Aorta (tissue), 5 donors: ENCODE measurements at regions of chr12 and their contacts with region 1.

Region 1: DNA sequence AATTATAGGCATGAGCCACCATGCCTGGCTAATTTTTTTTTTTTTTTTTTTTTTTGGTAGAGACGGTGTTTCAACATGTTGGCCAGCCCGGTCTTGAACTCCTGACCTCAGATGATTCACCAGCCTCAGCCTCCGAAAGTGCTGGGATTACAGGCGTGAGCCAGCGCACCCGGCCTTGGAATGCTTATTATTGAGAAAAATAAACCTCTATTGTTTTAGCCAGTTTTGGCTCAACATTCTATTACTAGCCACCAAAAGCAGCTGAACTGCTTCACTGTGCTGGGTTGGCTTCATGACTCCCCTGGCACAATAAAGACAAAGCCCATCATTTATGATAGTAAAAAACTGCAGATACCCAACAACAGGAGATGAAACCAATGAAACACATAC is 93.5 kb upstream of the CEP83 start:
- DNase-seq: no peak
- ATAC-seq: no peak
- H3K4me3 ChIP-seq: no peak overlapping the region
- H3K27ac ChIP-seq: no peak overlapping the region
- H3K4me1 ChIP-seq: no peaks in the 10 kb centered on the region
- H3K27me3 ChIP-seq: no peaks in the 10 kb centered on the region

Region 2: GRCh38 chr12:94753036-94753679 is 200.0 kb after region 1 on chr12:
- intact Hi-C with region 1: loop called in 1 of 2 experiments (anchors 5 kb)
- DNase-seq: no peak
- ATAC-seq: peak; percentile 54
- H3K4me3 ChIP-seq: no peak overlapping the region
- H3K27ac ChIP-seq: no peak overlapping the region
- H3K4me1 ChIP-seq: no peaks in the 10 kb centered on the region
- H3K27me3 ChIP-seq: no peaks in the 10 kb centered on the region